SK-N-SH (cell line): ENCODE measurements at regions of chr19 and their contacts with region 1.

Region 1: GRCh38 chr19:1082172-1082927 is 12.8 kb downstream of the POLR2E start:
- DNase-seq: peak; percentile 92
- H3K4me3 ChIP-seq: peak overlapping the region; percentile 45 to 47
- H3K27ac ChIP-seq: no peak overlapping the region
- H3K4me1 ChIP-seq: peaks cover 0 to 22% of the 10 kb centered on the region in 2 experiments; a peak in 2 of 4 replicates
- H3K27me3 ChIP-seq: no peaks in the 10 kb centered on the region
- CTCF ChIP-seq: no peak
- EP300 ChIP-seq: no peak
- RAD21 ChIP-seq: no peak

Region 2: DNA sequence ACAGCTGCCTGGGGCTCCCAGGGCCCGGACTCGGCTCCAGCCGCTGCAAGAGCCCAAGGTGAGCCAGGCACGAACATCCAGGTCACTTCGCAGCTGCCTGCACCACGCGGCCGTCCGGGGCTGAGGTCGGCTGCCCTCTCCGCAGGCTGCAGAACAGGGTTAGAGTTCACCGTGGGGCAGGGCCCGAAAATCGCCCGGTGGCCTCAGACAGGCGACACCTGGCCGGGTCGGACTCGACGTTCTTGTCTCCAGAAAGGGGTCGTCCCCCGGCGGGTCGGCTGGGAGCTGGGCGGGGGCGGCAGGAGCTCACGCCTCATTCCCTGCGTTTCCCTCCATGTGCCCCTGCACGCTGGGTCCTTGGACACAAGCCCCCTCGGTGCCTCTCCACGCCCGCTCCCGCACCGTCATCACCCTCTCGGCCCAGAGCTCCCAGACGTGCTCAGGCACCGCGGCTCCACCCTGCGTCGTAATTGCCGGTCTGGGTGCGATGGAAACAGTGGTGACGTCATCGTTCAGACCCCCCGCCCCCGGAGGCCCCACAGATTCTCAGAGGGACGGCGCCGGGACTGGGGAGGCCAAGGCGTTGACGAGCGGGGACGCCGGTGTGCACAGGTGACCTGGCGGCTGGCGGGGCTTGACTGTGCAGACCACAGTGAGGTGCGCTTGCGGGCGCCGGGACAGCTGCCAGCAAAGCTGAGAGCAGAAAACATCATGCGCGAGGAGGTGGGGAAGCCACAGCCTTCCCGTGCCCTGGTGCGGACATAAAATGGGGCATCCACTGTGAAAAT is 86.1 kb before region 1 on chr19:
- CTCF ChIA-PET with region 1: no interaction called
- POLR2A ChIA-PET with region 1: no interaction called
- DNase-seq: peak; percentile 83
- H3K4me3 ChIP-seq: peak overlapping the region; percentile 13 to 28; a peak in 2 of 4 replicates
- H3K27ac ChIP-seq: no peak overlapping the region
- H3K4me1 ChIP-seq: peaks cover 0 to 9% of the 10 kb centered on the region in 2 experiments; a peak in 1 of 4 replicates
- H3K27me3 ChIP-seq: peaks cover 36% of the 10 kb centered on the region; the same call in 1 of the 2 replicates
- CTCF ChIP-seq: no peak
- EP300 ChIP-seq: no peak
- RAD21 ChIP-seq: no peak

Region 3: GRCh38 chr19:1009041-1009975 is 73.0 kb before region 1 on chr19:
- CTCF ChIA-PET with region 1: no interaction called
- POLR2A ChIA-PET with region 1: no interaction called
- DNase-seq: no peak
- H3K4me3 ChIP-seq: no peak overlapping the region
- H3K27ac ChIP-seq: no peak overlapping the region
- H3K4me1 ChIP-seq: no peaks in the 10 kb centered on the region
- H3K27me3 ChIP-seq: peaks cover 1% of the 10 kb centered on the region
- CTCF ChIP-seq: no peak
- EP300 ChIP-seq: no peak
- RAD21 ChIP-seq: no peak

Region 4: GRCh38 chr19:1026189-1027019 is 55.9 kb before region 1 on chr19 and contains the start of gene CNN2:
- CTCF ChIA-PET with region 1: interaction called, 11 read pairs
- POLR2A ChIA-PET with region 1: no interaction called
- DNase-seq: peak; percentile 87
- H3K4me3 ChIP-seq: peak within 1 kb of the TSS; percentile 76 to 97
- H3K27ac ChIP-seq: peak within 1 kb of the TSS; percentile 81 to 84
- H3K4me1 ChIP-seq: peaks cover 0 to 14% of the 10 kb centered on the region in 2 experiments; a peak in 1 of 4 replicates
- H3K27me3 ChIP-seq: no peaks in the 10 kb centered on the region
- CTCF ChIP-seq: no peak
- EP300 ChIP-seq: no peak
- RAD21 ChIP-seq: no peak
- polyA plus RNA-seq, gene CNN2: 152 and 279 TPM in 2 replicates

Region 5: DNA sequence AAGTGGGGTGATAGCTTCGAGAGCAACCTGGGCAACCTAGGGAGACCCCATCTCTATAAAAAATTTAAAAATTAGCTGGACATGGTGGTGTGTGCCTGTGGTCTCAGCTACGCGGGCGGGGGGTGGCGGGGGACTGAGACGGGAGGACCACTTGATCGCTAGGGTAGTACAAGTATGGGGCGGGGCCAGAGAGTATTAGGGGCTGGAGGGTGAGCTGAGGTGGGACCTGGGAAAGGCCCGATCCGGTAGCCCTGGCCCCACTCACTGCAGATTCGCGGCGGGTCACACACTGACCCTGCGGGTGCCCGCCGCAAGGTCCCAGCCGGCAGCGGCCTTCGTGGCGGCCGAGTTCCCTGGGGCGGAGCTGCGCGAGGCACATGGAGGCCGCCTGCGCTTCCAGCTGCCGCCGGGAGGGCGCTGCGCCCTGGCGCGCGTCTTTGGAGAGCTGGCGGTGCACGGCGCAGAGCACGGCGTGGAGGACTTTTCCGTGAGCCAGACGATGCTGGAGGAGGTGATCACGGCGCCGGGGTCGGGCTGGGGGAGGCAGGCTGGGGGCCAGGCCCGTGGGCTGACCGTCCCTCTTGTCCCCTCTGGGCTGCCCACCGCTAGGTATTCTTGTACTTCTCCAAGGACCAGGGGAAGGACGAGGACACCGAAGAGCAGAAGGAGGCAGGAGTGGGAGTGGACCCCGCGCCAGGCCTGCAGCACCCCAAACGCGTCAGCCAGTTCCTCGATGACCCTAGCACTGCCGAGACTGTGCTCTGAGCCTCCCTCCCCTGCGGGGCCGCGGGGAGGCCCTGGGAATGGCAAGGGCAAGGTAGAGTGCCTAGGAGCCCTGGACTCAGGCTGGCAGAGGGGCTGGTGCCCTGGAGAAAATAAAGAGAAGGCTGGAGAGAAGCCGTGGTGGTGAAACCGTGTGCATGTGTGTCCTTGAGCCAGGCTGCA is 17.4 kb before region 1 on chr19:
- CTCF ChIA-PET with region 1: interaction called, 24 read pairs
- POLR2A ChIA-PET with region 1: interaction called, 5 read pairs
- DNase-seq: peak; percentile 88
- H3K4me3 ChIP-seq: no peak overlapping the region
- H3K27ac ChIP-seq: no peak overlapping the region
- H3K4me1 ChIP-seq: peaks cover 0 to 20% of the 10 kb centered on the region in 2 experiments; a peak in 1 of 4 replicates
- H3K27me3 ChIP-seq: peaks cover 26% of the 10 kb centered on the region
- CTCF ChIP-seq: peak; percentile 55
- EP300 ChIP-seq: no peak
- RAD21 ChIP-seq: peak; percentile 42

Region 6: DNA sequence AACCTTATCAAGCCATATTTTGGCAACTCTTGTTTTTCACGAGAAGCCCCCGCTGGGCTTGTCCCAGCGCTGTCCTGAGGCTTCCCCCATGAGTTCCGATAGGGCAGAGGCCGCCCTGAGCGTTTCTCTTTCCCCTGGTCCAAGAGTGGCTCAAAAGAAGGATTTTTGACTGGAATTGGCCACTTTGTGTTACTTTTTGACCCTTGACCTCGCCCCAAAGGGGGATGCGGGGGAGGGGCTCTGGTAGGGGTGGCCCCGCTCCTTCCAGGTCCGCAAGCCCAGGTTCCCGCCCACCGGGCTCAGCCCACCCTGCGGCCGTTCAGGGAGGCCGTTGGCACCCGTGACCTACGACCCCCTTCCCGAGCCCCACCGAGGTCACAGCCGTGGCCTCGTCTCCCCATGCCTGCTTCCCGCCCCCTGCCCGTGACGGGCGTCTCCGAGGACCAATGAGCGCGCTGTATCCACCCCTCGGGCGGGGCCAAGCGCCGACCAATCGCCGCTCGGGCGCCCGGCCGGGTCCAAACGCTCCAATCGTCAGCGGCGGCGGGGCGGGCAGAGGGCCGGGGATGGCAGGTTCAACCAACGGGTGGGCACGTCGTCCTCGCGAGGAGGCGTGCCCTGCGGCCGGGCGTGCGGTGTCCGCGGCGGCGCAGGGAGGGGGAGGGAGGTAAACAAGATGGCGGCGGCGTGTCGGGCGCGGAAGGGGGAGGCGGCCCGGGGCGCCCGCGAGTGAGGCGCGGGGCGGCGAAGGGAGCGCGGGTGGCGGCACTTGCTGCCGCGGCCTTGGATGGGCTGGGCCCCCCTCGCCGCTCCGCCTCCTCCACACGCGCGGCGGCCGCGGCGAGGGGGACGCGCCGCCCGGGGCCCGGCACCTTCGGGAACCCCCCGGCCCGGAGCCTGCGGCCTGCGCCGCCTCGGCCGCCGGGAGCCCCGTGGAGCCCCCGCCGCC is 123.0 kb after region 1 on chr19 and contains the start of gene STK11:
- CTCF ChIA-PET with region 1: no interaction called
- POLR2A ChIA-PET with region 1: no interaction called
- DNase-seq: peak; percentile 99
- H3K4me3 ChIP-seq: peak within 1 kb of the TSS; percentile 65 to 85
- H3K27ac ChIP-seq: peak within 1 kb of the TSS; percentile 47 to 49; a peak in 3 of 4 replicates
- H3K4me1 ChIP-seq: peaks cover 8 to 30% of the 10 kb centered on the region in 2 experiments; a peak in 1 of 4 replicates
- H3K27me3 ChIP-seq: no peaks in the 10 kb centered on the region
- CTCF ChIP-seq: no peak
- EP300 ChIP-seq: no peak
- RAD21 ChIP-seq: no peak
- polyA plus RNA-seq, gene STK11: 53.5 and 55.5 TPM in 2 replicates

Region 7: DNA sequence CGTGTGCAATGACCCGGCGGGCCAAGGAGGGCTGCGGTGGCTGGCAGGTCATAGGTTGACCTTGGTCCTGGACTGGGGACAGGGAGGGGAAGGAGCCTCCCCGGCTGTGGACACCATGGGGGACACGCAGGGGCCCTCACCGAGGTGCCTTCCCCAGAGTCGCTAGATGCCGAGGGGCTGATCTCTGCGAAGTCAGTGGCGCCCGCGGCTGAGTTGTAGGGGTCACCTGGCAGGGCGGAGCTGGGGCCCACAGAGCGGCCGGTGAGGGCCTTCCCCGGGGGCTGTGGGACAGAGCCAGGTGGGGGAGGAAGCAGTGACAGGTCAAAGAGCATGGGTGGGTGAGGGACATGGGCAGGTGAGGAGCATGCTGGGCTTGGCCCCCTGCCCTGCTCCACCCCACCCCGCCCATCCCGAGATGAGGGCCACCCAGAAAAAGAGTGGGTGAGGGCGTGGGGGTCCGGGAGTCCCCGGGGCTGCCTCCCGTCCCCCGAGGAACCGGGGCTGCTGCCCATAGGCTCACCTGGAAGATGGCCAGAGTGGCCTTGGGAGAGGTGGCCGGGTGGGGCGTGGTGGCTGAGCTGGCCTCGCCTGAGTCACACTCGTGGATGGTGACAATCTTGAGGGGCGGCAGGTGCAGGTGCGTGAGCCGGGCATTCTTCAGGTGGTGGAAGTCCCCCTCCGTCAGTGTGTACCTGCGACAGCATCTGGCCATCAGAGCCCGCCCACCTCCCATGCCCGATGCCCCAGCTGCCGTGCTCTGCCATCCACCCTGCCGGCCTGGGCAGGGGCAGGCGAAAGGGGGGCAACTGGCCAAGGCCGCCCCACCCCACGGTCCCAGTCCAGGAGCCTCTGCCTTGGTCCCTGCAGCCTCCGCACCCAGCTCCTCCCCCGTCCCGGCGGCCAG is 152.0 kb after region 1 on chr19:
- CTCF ChIA-PET with region 1: no interaction called
- POLR2A ChIA-PET with region 1: no interaction called
- DNase-seq: no peak
- H3K4me3 ChIP-seq: no peak overlapping the region
- H3K27ac ChIP-seq: no peak overlapping the region
- H3K4me1 ChIP-seq: peaks cover 0 to 17% of the 10 kb centered on the region in 2 experiments; a peak in 1 of 4 replicates
- H3K27me3 ChIP-seq: no peaks in the 10 kb centered on the region
- CTCF ChIP-seq: no peak
- EP300 ChIP-seq: no peak
- RAD21 ChIP-seq: no peak